ENCODE measurements at regions of chr14 and their contacts with region 1.

Region 1: GRCh38 chr14:64434528-64434927 is 30.8 kb upstream of the AKAP5 start:
- DNase-seq: no peak
- ATAC-seq: no peak
- H3K4me3 ChIP-seq: no peak overlapping the region
- H3K27ac ChIP-seq: no peak overlapping the region
- H3K4me1 ChIP-seq: peaks cover 32 to 34% of the 10 kb centered on the region in 2 experiments
- H3K27me3 ChIP-seq: no peaks in the 10 kb centered on the region
- CTCF ChIP-seq: no peak
- POLR2A ChIP-seq: no peak
- RAD21 ChIP-seq: no peak

Region 2: GRCh38 chr14:64421166-64421565 is 13.4 kb before region 1 on chr14:
- CTCF ChIA-PET with region 1: interaction called, 21 read pairs
- POLR2A ChIA-PET with region 1: no interaction called
- RAD21 ChIA-PET with region 1: interaction called in 1 of 2 experiments, 3 read pairs
- intact Hi-C with region 1: no loop called
- DNase-seq: no peak
- ATAC-seq: peak; percentile 74
- H3K4me3 ChIP-seq: no peak overlapping the region
- H3K27ac ChIP-seq: peak overlapping the region; percentile 31
- H3K4me1 ChIP-seq: peaks cover 8 to 13% of the 10 kb centered on the region in 2 experiments
- H3K27me3 ChIP-seq: no peaks in the 10 kb centered on the region
- CTCF ChIP-seq: no peak
- POLR2A ChIP-seq: no peak
- RAD21 ChIP-seq: no peak

Measured in HCT116 (cell line).